Activated CD4-positive, alpha-beta memory T cell treated with anti-CD3 and anti-CD28 coated beads for 36 hours (primary cell): ENCODE measurements at regions of chr20 and their contacts with region 1.

Region 1: DNA sequence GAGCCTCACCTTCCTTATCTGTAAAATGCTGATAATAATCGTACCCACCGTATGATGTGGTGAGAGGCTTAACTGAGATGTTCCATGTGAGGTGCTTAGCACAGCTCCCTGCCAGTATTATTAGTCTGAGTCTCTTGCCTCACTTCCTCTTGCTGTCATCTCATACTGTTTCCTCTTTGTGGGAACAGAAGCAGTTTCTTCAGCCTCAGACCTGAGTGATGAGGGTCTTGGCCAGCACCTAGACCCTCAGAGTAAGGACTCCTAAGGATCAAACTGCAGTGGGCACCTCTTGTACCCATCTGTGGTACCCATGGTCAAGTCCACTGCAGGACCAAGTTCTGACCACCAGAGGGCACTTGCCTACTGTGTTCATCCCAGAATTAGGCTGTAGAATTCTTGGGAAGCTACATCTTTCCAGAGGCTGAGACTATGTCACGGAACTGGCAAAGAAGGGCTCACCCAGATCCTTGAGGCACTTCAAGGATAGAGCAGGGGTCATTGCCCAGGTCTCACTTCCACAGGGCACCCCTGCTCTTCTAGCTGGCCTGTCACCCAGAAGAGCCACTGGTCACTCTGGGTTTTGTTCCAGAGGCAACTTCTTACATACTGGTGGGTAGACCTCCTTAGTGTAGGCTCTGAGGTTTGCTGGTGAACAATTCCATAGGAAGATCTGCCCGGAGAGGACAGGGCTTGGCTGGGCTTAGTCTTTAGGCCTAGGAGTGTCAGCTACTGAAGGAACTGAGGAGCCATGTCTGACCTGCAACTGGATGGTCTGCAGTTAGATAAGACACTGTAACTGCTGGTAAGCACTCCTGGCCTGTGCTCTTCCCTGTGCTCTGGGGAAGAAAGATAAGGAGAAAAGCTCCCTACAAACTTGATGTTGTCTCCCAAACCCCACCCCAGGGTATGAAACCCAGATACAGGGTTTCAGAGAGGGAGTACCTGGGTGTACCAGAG is 20.6 kb upstream of the SGK2 start:
- DNase-seq: peak; percentile 54
- H3K4me3 Mint-ChIP-seq: no peak overlapping the region
- H3K27ac Mint-ChIP-seq: no peak overlapping the region
- H3K4me1 Mint-ChIP-seq: no peaks in the 10 kb centered on the region
- H3K27me3 Mint-ChIP-seq: no peaks in the 10 kb centered on the region

Region 2: GRCh38 chr20:43691928-43692524 is 153.8 kb after region 1 on chr20:
- CTCF ChIA-PET with region 1: interaction called, 86 read pairs
- POLR2A ChIA-PET with region 1: no interaction called
- intact Hi-C with region 1: loop called (anchors 5 kb)
- DNase-seq: peak; percentile 73
- H3K4me3 Mint-ChIP-seq: no peak overlapping the region
- H3K27ac Mint-ChIP-seq: no peak overlapping the region
- H3K4me1 Mint-ChIP-seq: peaks cover 6% of the 10 kb centered on the region
- H3K27me3 Mint-ChIP-seq: no peaks in the 10 kb centered on the region